Heart left ventricle (tissue), 16 donors: ENCODE measurements at regions of chr4 and their contacts with region 1.

Region 1: DNA sequence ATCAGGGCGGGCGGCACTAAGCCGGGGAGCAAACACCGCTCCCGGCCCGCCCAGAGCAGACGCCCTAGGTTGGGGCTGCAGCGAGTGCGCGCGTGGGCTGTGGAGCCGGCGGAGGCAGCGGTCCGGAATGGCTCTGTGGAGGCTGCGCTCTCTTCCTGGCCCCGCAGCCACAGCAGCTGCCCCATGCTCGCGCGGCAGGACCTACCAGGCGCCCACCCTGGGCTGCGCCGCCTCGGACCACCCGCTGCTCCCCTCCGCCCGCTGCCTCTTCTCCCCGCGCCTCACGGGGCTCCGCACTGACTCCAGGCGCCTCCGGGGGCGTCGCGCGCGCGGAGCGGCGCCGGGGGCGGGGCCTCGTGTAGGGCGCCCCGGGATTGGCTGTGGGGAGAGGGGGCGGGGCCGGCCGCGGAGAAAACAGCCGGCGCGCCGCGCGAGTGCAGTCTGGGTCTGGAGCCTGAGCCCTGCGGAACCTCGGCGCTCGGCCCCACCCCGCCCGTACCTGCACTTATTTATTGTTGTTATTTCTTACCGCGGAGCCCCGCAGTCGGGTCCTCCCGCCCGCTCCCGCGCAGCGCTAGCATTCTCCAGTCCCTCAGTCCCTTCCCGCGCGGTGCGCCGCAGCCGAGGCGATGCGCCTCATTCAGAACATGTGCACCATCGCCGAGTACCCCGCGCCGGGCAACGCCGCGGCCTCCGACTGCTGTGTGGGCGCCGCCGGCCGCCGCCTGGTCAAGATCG is at the start of gene RASL11B:
- DNase-seq: peak; percentile 86 to 92 (median 91)
- ATAC-seq: peak; percentile 92 to 98 (median 98)
- H3K4me3 ChIP-seq: peak within 1 kb of the TSS; percentile 64 to 91 (median 74)
- H3K27ac ChIP-seq: peak within 1 kb of the TSS; percentile 17 to 90 (median 74)
- H3K4me1 ChIP-seq: peaks cover 0 to 48% (median 27%) of the 10 kb centered on the region in 12 donors
- H3K27me3 ChIP-seq: peaks cover 0 to 15% (median 0%) of the 10 kb centered on the region in 9 donors
- CTCF ChIP-seq: peak in 7 of 12 donors; percentile 33 to 52 (median 40)
- POLR2A ChIP-seq: peak; percentile 52 to 96
- total RNA-seq, gene RASL11B: 2.7 to 16.1 (median 5.5) TPM

Region 2: DNA sequence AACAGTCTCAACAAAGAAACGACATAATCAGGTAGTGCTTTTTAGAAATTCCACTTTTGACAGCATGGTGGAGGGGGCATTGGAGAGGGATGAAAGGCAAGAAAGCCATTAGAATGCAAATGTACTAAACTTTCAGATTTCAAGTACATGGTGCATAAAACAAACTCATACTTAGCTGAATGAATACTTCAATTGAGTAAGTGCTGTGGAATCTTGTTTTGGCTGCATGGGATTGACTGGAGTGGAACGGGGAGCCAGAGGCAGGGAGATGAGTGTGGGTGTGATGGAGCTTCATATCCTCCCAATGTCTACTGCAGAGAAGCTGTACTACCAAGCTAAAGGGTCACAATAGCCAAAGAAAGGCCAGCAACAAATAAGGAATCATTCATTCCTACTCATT is 255.3 kb before region 1 on chr4:
- intact Hi-C with region 1: loop called in 1 of 10 experiments (anchors 10 kb)
- DNase-seq: no peak
- ATAC-seq: peak in 1 of 4 donors; percentile 43
- H3K4me3 ChIP-seq: no peak overlapping the region
- H3K27ac ChIP-seq: no peak overlapping the region
- H3K4me1 ChIP-seq: peaks cover 0 to 26% (median 0%) of the 10 kb centered on the region in 12 donors
- H3K27me3 ChIP-seq: no peaks in the 10 kb centered on the region
- CTCF ChIP-seq: no peak
- POLR2A ChIP-seq: no peak

Region 3: DNA sequence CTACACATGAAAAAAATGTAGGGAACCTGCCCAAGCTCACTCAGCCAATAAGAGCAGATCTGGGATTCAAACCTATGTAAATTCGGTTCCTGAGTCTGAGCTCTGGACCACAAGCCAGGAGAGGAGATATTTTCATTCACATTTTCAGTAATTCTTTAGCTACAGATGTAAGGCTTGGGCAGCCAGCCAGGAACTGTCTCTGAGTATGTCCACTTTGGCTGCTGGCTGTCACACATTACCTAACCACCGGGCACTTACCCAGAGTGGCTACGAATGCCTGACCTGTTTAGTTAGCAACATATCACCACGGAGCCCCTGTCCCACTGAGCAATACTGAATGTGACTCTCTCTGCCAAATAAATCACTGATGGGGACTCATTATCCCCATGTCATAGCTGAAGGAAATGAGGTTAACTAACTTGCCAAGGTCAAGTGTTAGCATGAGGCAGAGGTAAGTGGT is 218.2 kb before region 1 on chr4:
- intact Hi-C with region 1: loop called in 1 of 10 experiments (anchors 5 kb)
- DNase-seq: peak; percentile 74 to 93 (median 85)
- ATAC-seq: peak; percentile 88 to 94 (median 93)
- H3K4me3 ChIP-seq: no peak overlapping the region
- H3K27ac ChIP-seq: peak overlapping the region in 10 of 12 donors; percentile 9 to 75 (median 50)
- H3K4me1 ChIP-seq: peaks cover 2 to 94% (median 50%) of the 10 kb centered on the region in 12 donors
- H3K27me3 ChIP-seq: no peaks in the 10 kb centered on the region
- CTCF ChIP-seq: no peak
- POLR2A ChIP-seq: no peak

Region 4: GRCh38 chr4:52721968-52722815 is 139.9 kb before region 1 on chr4:
- intact Hi-C with region 1: loop called in 7 of 10 experiments (anchors 5 to 10 kb)
- DNase-seq: peak; percentile 95 to 97 (median 95)
- ATAC-seq: peak; percentile 98 to 99 (median 98)
- H3K4me3 ChIP-seq: peak overlapping the region; percentile 62 to 96 (median 78)
- H3K27ac ChIP-seq: peak overlapping the region; percentile 80 to 97 (median 92)
- H3K4me1 ChIP-seq: peaks cover 0 to 16% (median 2%) of the 10 kb centered on the region in 12 donors
- H3K27me3 ChIP-seq: no peaks in the 10 kb centered on the region
- CTCF ChIP-seq: peak in 3 of 12 donors; percentile 9 to 32 (median 13)
- POLR2A ChIP-seq: peak in 1 of 2 donors; percentile 80

Region 5: DNA sequence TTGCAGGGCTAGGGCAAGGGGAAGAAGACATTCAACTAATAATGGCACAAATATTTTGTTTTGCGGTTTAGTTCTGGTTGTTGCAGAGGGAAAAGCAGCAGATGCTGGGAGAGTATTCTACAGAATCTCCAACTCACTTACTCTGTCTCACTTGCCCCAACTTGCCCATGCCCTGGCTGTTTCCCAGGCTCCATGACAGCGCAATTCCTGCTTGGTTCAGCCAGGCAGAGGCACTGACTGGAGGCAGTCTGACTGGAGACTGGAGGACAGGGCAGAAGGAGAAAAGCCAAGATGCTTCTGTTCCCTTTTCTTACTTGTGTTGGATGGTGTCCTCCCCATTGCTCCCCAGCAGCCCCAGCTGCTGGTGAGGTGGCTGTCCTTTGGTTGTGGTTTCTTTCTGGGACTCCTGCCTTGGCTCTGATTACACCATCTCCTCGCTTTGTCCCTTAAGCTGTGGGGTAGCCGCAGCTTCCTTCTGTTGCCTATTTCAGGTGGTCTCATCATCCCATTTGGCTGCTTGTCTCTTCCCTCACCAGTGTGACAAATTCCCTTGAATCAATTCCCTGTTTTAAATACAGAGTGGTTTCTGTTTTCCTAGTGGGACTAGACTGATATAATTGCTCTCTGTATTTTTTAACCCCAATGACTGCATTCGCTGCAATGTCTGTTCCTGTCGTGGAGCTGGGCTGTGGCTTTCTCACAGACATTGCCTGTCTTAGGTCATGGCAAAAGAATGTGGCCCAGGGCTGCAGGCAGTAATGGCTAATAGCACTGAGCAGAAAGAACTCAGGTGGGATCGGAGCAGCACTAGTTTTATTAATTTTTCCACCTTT is 24.1 kb before region 1 on chr4:
- intact Hi-C with region 1: loop called in 1 of 10 experiments (anchors 2 kb)
- DNase-seq: peak in 1 of 5 donors; percentile 22
- ATAC-seq: peak in 3 of 4 donors; percentile 40 to 74 (median 51)
- H3K4me3 ChIP-seq: no peak overlapping the region
- H3K27ac ChIP-seq: peak overlapping the region in 5 of 12 donors; percentile 9 to 70 (median 44)
- H3K4me1 ChIP-seq: peaks cover 0 to 61% (median 45%) of the 10 kb centered on the region in 12 donors
- H3K27me3 ChIP-seq: no peaks in the 10 kb centered on the region
- CTCF ChIP-seq: no peak
- POLR2A ChIP-seq: no peak

Region 6: DNA sequence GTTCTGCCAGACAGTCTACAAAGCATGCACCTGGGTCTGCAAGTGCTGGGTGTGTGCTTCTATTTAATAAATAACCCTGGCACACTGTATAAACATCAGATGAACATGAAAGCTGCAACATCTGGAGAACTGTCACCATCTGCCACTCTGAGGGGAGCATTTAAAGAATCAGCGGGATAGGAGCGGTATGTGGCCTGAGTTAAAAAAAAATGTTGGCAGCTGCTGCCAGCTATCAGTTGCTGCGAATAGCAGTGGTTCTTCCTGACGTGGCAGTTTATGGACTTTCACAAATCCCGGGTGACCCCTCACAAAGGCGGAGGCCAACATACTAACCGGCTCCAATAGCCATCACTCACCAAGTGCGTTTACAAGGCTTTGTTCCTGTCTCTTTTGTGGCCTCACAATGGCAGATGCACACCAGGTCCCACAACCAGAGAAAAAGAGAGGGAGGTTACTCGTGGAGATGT is 95.2 kb after region 1 on chr4:
- intact Hi-C with region 1: loop called in 2 of 10 experiments (anchors 5 to 10 kb)
- DNase-seq: peak in 4 of 5 donors; percentile 26 to 44 (median 36)
- ATAC-seq: peak; percentile 73 to 80 (median 76)
- H3K4me3 ChIP-seq: no peak overlapping the region
- H3K27ac ChIP-seq: peak overlapping the region in 10 of 12 donors; percentile 18 to 70 (median 50)
- H3K4me1 ChIP-seq: peaks cover 0 to 33% (median 11%) of the 10 kb centered on the region in 12 donors
- H3K27me3 ChIP-seq: no peaks in the 10 kb centered on the region
- CTCF ChIP-seq: no peak
- POLR2A ChIP-seq: no peak

Region 7: DNA sequence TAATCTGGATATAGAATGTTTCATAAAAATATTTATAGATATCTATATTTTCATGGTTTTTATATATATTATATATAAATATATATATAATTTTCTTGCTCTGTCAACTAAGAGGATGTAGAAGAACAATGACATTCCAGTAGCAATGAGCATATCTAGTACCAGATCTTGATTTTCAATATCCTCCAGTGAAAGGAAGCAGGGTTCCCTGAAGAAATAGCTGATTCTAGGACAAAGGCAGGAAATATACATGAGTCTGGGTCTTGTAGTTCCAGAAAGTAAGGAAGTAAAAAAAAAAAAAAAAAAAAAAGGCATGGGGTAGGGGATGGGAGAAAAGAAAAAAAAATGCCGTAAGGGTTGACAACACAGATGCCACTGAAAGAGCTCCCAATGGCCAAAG is 241.4 kb after region 1 on chr4:
- intact Hi-C with region 1: no loop called
- DNase-seq: no peak
- ATAC-seq: peak in 3 of 4 donors; percentile 43 to 83 (median 51)
- H3K4me3 ChIP-seq: no peak overlapping the region
- H3K27ac ChIP-seq: peak overlapping the region in 8 of 12 donors; percentile 23 to 72 (median 48)
- H3K4me1 ChIP-seq: peaks cover 0 to 20% (median 7%) of the 10 kb centered on the region in 12 donors
- H3K27me3 ChIP-seq: no peaks in the 10 kb centered on the region
- CTCF ChIP-seq: no peak
- POLR2A ChIP-seq: no peak